ENCODE measurements at regions of chr22 and their contacts with region 1.

Region 1: DNA sequence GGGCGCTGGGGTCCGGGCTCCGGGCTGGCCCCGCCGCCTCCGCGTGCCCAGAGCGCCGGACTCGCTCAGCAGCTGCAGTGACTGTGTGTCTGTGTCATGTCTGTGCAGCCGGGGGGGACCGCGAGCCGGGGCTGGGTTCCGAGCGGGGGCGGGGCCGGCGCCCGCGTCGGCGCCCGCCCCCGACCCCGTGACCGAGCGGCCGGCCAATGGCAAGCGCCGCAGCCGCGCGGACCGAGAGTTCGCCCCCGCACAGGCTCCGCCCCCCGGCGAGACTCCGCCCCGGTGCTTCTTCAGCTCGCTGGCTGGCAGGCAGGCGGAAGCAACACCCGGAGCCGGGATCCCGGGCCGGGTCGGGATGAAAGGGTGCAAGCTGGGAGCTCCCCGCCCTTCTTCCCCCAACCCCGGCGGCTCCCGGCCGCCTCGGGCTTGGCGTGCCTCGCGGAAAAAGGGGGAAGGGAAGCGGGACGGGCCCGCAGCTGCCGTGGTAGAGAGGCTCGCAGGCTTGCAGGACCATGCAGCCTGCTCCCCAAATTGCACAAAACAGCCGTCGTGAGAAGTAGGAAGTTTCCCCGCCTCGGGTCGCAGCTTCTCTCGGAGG is 750 bp upstream of the LARGE1 start:
- DNase-seq: peak; percentile 96
- CTCF ChIP-seq: no peak

Region 2: DNA sequence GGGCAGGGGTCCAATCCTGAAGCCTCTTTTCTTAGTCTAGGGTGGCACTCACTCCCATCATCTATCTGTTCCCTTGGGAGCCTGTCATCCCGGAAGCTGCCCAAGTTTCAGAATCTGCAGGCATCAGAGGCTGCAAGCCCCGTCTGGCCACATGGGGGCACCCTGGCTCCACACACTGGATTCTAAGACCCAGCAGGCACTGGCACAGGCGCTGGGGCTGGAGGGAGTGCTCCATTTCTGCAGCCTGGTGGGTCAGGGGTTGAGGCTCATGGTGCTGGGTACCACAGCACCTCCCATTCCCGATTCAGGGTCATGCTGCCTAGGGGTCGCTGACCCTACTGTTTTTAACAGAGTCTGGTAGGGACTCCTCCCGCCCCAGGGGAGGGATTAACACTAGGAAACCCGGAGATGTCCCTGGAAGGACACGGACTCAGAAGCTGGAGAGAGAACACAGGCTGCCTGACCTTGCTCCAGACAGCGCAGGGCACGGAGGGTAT is 618.9 kb before region 1 on chr22:
- in situ Hi-C with region 1: loop called (anchors 10 kb)
- DNase-seq: peak; percentile 82
- CTCF ChIP-seq: peak; percentile 97

Region 3: GRCh38 chr22:33519071-33519973 is 401.7 kb before region 1 on chr22:
- in situ Hi-C with region 1: loop called (anchors 5 kb)
- DNase-seq: peak; percentile 83
- CTCF ChIP-seq: peak; percentile 36

Region 4: DNA sequence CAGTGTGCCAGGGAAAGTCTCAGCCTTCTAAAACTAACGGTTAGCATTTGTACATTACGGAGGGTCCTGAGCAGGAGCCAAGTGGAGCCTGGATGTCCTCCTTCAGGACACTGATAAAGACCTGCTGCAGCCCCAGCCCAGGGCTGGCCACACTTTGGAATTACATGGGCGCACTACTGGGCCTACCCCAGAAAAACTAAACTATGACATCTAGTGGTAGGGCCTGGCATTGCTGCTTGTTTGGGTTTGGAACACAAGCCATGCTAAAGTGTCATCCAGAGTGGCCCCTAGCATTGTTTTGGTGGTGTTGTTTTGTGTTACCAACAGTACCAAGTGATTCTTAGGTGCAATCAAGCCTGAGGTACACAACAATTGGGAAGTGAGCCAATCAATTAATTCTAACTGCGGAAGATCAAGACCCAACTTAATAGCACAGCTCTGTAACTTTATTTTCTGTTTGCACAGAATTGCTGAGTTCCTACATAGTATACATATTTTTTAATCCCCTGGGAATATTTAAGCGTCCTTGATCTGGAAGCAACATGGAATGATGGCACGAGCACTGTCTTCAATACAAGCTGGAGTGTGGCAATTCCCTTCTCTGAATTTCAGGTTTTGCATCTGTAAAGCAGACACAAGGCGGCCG is 341.5 kb before region 1 on chr22:
- in situ Hi-C with region 1: loop called (anchors 10 kb)
- DNase-seq: peak; percentile 60
- CTCF ChIP-seq: peak; percentile 82

Region 5: GRCh38 chr22:33785283-33785968 is 135.6 kb before region 1 on chr22:
- in situ Hi-C with region 1: loop called (anchors 10 kb)
- DNase-seq: no peak
- CTCF ChIP-seq: no peak

Region 6: DNA sequence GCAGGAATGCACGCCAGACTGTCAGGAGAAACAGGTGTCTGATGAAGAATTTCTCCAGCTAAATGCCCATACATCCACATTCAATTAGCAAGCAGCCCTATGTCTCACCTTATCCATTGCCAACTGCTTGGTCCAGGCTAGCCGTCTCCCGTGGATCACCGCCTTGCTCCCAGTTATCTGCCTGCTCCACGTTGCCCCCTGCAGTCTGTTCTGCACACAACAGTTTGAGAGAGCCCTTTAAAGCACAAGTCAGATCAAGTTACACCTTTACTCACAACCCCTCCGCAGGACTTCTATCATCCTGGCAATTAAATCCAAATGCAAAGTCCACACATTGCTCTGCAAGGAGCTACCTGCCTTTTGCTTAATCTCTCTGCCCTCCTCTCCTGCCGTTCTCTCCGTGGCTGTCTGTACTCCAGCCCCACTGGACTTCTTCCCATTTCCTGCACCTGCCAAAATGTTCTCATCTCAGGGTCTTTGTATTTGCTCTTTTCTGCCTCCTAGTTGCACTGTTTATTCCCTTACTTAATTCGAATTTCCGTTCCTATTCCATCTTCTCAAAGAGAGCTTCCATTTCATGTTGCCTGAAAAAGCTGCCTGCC is 184.5 kb after region 1 on chr22:
- in situ Hi-C with region 1: loop called (anchors 10 kb)
- DNase-seq: peak; percentile 36
- CTCF ChIP-seq: peak; percentile 58

Measured in GM13976 (cell line).